ENCODE measurements at regions of chr12 and their contacts with region 1.

Region 1: DNA sequence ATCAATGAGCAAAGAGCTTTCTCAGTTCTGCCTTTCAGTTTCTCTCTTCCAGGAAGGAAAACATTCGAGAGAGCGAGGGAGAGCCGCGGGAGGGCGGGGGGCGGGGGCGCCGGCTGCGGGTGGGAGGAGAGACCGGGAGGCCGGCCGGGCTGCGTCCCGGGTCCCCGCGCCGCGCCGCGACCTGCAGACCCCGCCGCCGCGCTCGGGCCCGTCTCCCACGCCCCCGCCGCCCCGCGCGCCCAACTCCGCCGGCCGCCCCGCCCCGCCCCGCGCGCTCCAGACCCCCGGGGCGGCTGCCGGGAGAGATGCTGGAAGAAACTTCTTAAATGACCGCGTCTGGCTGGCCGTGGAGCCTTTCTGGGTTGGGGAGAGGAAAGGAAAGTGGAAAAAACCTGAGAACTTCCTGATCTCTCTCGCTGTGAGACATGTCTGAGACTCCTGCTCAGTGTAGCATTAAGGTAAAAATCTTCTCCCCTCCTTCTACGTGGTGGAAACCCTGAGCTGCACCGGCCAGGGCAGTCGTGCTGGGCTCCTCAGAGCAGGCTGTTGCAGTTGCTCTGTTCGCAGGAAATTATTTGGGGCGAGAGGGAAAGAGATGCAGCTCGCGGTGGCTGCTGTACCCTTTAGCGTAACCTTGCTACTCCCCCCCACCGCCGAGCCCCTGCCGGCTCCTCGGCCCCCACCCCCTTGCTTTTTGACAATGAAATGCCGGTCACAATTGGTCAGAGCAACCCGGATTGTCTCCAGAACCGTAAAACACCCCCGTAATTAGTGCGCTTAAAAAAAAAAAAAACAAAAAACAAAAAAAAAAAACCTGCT is 438 bp downstream of the ETV6 start:
- DNase-seq: peak in 35 of 42 donors; percentile 27 to 67 (median 42)

Region 2: GRCh38 chr12:11543457-11544158 is 106.3 kb before region 1 on chr12:
- intact Hi-C with region 1: no loop called
- DNase-seq: peak in 1 of 42 donors; percentile 14

Region 3: DNA sequence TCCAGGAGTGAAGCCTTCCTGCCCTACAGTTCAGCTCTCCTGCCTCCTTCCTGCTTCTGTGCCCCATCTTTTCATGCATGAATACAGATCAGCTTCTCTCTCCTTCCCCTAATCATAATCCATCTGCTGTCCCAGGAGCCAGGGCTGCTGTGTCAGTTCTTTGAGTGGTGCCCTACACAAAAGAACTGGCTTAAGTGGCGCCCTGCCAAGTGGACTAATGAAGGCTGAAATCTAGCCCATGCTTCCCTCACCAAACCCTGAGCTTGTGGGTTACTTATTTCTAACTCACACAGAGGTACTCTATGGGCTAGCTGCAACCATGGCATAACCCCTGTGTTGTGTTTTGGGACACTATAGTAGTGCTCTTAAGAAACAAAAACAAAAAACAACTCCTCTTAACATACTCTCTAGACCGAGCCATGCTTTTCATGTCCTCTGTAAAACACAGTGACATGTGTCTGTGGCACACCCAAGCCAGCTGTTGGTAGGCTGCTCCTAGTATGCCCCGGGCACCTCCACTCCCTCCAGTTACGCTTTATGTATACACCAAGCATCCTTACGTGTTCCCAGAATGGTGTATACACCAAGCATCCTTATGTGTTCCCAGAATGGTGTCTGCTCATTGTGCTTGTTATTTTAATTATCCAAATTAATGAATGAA is 19.7 kb before region 1 on chr12:
- intact Hi-C with region 1: no loop called
- DNase-seq: peak in 10 of 42 donors; percentile 14 to 64 (median 36)

Region 4: GRCh38 chr12:11812586-11813427 is 162.9 kb after region 1 on chr12:
- intact Hi-C with region 1: loop called (anchors 10 kb)
- DNase-seq: peak in 31 of 42 donors; percentile 34 to 74 (median 57)